MCF 10A (cell line): ENCODE measurements at regions of chr2 and their contacts with region 1.

Region 1: DNA sequence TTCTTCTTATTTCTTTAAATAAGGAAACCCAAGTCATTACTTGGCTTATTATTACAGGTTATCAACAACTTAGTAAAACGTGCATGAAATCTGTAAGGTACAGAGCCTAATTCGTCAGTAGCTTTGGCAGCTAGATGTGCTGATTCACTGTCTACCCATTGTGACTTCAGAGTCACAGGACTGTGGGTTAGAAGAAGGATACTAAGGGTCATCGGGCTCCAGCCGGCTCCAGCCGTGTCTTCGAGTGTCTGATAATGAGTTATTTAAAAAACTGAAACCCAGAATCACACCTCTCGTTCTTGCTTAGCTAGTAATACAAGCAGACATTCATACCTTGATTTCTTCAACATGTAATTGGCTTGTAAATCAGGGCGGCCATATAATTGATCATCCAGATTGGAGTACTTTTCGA is 170.5 kb downstream of the FMNL2 start:
- DNase-seq: peak; percentile 77
- H3K4me3 Mint-ChIP-seq: peak overlapping the region; percentile 58
- H3K27ac Mint-ChIP-seq: peak overlapping the region; percentile 91
- H3K4me1 Mint-ChIP-seq: peaks cover 47% of the 10 kb centered on the region
- H3K27me3 Mint-ChIP-seq: no peaks in the 10 kb centered on the region
- CTCF ChIP-seq: no peak

Region 2: GRCh38 chr2:152445791-152446201 is 59.7 kb before region 1 on chr2:
- CTCF ChIA-PET with region 1: interaction called, 4 read pairs
- POLR2A ChIA-PET with region 1: interaction called, 10 read pairs
- intact Hi-C with region 1: no loop called
- DNase-seq: peak; percentile 84
- H3K4me3 Mint-ChIP-seq: peak overlapping the region; percentile 29
- H3K27ac Mint-ChIP-seq: peak overlapping the region; percentile 12
- H3K4me1 Mint-ChIP-seq: peaks cover 47% of the 10 kb centered on the region
- H3K27me3 Mint-ChIP-seq: no peaks in the 10 kb centered on the region
- CTCF ChIP-seq: no peak

Region 3: GRCh38 chr2:152477347-152478092 is 28.0 kb before region 1 on chr2:
- CTCF ChIA-PET with region 1: interaction called, 3 read pairs
- POLR2A ChIA-PET with region 1: interaction called, 38 read pairs
- intact Hi-C with region 1: no loop called
- DNase-seq: peak; percentile 65
- H3K4me3 Mint-ChIP-seq: no peak overlapping the region
- H3K27ac Mint-ChIP-seq: peak overlapping the region; percentile 35
- H3K4me1 Mint-ChIP-seq: peaks cover 17% of the 10 kb centered on the region
- H3K27me3 Mint-ChIP-seq: no peaks in the 10 kb centered on the region
- CTCF ChIP-seq: no peak

Region 4: GRCh38 chr2:152518641-152519580 is 13.4 kb after region 1 on chr2:
- CTCF ChIA-PET with region 1: interaction called, 6 read pairs
- POLR2A ChIA-PET with region 1: interaction called, 13 read pairs
- intact Hi-C with region 1: no loop called
- DNase-seq: no peak
- H3K4me3 Mint-ChIP-seq: no peak overlapping the region
- H3K27ac Mint-ChIP-seq: no peak overlapping the region
- H3K4me1 Mint-ChIP-seq: peaks cover 23% of the 10 kb centered on the region
- H3K27me3 Mint-ChIP-seq: no peaks in the 10 kb centered on the region
- CTCF ChIP-seq: no peak

Region 5: GRCh38 chr2:152573168-152573567 is 67.7 kb after region 1 on chr2:
- CTCF ChIA-PET with region 1: no interaction called
- POLR2A ChIA-PET with region 1: interaction called, 16 read pairs
- intact Hi-C with region 1: loop called (anchors 5 kb)
- DNase-seq: peak; percentile 69
- H3K4me3 Mint-ChIP-seq: no peak overlapping the region
- H3K27ac Mint-ChIP-seq: peak overlapping the region; percentile 37
- H3K4me1 Mint-ChIP-seq: peaks cover 16% of the 10 kb centered on the region
- H3K27me3 Mint-ChIP-seq: no peaks in the 10 kb centered on the region
- CTCF ChIP-seq: no peak

Region 6: GRCh38 chr2:152781175-152781574 is 275.7 kb after region 1 on chr2:
- CTCF ChIA-PET with region 1: no interaction called
- POLR2A ChIA-PET with region 1: no interaction called
- intact Hi-C with region 1: no loop called
- DNase-seq: no peak
- H3K4me3 Mint-ChIP-seq: no peak overlapping the region
- H3K27ac Mint-ChIP-seq: no peak overlapping the region
- H3K4me1 Mint-ChIP-seq: no peaks in the 10 kb centered on the region
- H3K27me3 Mint-ChIP-seq: no peaks in the 10 kb centered on the region
- CTCF ChIP-seq: no peak